ENCODE measurements at regions of chr10 and their contacts with region 1.

Region 1: DNA sequence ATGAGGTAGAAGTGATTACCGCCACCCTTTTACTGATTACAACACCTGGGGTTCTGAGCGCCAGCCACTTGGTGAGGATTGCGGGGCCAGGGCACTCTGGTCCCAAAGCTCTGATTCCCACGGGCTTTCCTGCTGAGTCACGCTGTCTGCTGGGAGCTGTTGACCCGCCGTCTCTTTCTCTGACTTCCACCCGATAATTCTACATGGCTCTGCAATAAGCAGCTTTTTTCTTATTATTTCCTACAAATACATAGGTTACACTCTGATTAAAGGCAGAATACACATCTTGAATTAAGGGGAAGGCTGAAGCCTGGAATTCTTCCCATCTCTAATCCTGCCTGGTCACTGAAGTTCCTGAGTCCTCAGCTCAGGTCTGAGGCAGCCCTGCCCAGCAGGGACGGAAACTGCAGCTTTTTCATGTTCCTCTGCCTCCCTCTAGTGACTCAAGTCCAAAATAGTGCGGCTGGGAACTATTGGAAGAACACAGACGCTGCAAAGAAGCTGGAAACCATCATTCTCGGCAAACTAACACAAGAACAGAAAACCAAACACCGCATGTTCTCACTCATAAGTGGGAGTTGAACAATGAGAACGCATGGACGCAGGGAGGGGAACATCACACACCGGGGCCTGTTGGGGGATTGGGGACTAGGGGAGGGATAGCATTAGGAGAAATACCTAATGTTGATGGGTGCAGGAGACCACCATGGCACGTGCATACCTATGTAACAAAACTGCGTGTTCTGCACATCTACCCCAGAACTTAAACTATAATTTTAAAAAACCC is 178.3 kb downstream of the PRKCQ start:
- DNase-seq: peak in 8 of 9 donors; percentile 49 to 74 (median 66)
- ATAC-seq: peak; percentile 87
- H3K4me3 ChIP-seq: no peak overlapping the region
- H3K4me3 Mint-ChIP-seq: peak overlapping the region in 9 of 10 donors; percentile 0 to 49 (median 38)
- H3K27ac ChIP-seq: no peak overlapping the region
- H3K27ac Mint-ChIP-seq: peak overlapping the region in 8 of 9 donors; percentile 4 to 82 (median 56)
- H3K4me1 ChIP-seq: peaks cover 0 to 11% of the 10 kb centered on the region in 2 donors
- H3K4me1 Mint-ChIP-seq: peaks cover 4 to 33% (median 18%) of the 10 kb centered on the region in 7 donors
- H3K27me3 ChIP-seq: no peaks in the 10 kb centered on the region
- H3K27me3 Mint-ChIP-seq: peaks cover 0 to 13% (median 0%) of the 10 kb centered on the region in 5 donors

Region 2: DNA sequence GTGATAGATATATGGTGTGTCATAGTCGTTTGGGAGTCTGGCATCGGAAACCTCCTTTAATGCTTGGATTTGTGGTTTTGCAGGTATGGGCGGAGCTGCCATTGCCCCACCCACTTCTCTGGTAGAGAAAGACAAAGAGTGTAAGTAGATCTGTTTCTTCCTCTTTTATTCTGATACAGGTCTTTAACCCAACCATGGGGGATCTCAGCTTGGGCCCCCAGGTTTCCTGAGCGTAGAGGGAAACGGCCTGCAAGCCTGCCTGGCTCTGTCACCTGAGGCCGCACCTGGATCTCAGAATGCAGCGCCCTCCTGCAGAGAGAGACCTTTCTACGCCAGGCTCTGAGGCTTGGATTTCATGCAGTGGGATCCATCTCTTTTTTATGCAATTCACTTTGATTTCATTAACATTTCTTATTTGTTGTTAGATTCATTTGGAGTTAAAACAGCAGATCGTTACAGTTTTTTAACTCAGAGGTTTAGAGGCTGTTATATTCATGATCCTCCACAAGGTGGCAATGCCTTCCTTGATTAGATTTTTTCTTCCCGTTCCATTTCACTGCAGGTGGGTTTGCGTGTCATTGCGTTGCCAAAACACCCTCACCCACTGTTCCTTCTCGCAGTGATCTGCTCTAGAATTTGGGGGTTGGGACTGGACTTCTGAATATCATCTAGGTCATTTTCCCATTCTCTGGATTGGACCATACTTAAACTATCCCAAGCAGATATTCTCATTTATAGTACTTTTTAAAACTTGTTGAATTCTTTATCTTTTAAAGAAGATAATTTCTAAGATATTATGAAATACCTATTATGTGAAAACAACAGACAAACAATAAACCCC is 292.9 kb before region 1 on chr10:
- CTCF ChIA-PET with region 1: interaction called, 82 read pairs
- POLR2A ChIA-PET with region 1: interaction called, 4 read pairs
- intact Hi-C with region 1: loop called (anchors 1 kb)
- DNase-seq: peak in 7 of 9 donors; percentile 38 to 66 (median 62)
- ATAC-seq: peak; percentile 85
- H3K4me3 ChIP-seq: no peak overlapping the region
- H3K4me3 Mint-ChIP-seq: peak overlapping the region in 3 of 10 donors; percentile 2 to 37 (median 29)
- H3K27ac ChIP-seq: no peak overlapping the region
- H3K27ac Mint-ChIP-seq: peak overlapping the region; percentile 37 to 91 (median 80)
- H3K4me1 ChIP-seq: peaks cover 10 to 11% of the 10 kb centered on the region in 2 donors
- H3K4me1 Mint-ChIP-seq: peaks cover 11 to 38% (median 23%) of the 10 kb centered on the region in 7 donors
- H3K27me3 ChIP-seq: no peaks in the 10 kb centered on the region
- H3K27me3 Mint-ChIP-seq: no peaks in the 10 kb centered on the region

Region 3: DNA sequence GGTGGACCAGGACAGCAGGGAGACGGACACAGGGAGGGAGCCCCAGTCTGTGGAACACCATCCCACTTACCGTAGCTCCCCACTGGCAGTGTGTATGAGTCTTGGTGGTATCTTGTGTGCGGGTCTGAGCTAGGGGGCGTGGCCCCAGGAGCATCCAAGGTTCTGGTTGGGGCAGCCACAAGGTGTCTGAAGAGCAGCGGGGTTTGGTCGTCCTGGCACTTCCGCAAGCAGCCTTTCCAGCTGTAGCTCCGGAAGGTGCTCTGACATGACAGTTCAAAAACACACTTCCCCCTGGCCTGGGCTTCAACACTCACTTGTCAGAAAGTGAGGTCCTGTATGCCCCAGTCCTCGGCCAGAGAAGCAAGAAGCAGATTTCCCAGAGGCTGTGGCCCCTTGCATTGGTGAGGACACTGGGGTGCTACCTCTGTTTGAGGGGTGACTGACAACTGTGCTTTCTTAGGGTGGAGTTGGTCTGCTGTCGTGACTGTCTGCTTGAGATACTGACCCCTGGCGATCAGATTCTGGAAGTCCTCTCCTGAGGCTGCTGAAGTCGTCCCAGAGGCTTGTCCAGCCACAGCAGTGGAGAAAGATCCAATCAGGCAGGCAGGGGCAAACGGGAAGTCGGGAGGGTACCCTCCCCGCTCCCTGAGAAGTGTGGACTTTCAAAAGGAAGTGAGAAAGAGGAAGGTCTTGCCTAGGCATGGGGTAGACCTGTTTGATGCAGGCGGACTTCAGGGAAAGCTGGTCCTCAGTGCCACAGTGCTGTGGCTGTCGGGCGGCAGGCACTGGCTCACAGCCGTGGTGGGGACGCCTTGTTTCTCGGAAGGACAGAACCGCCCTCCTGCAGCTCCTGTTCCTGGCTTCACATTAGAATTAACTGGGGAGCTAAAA is 250.4 kb before region 1 on chr10:
- CTCF ChIA-PET with region 1: interaction called, 12 read pairs
- POLR2A ChIA-PET with region 1: interaction called, 3 read pairs
- intact Hi-C with region 1: loop called in 1 of 2 experiments (anchors 1 kb)
- DNase-seq: peak; percentile 26 to 58 (median 53)
- ATAC-seq: peak; percentile 79
- H3K4me3 ChIP-seq: peak overlapping the region; percentile 28
- H3K4me3 Mint-ChIP-seq: peak overlapping the region; percentile 70 to 85 (median 80)
- H3K27ac ChIP-seq: peak overlapping the region; percentile 25
- H3K27ac Mint-ChIP-seq: peak overlapping the region; percentile 68 to 92 (median 85)
- H3K4me1 ChIP-seq: peaks cover 1 to 32% of the 10 kb centered on the region in 2 donors
- H3K4me1 Mint-ChIP-seq: peaks cover 49 to 68% (median 59%) of the 10 kb centered on the region in 7 donors
- H3K27me3 ChIP-seq: no peaks in the 10 kb centered on the region
- H3K27me3 Mint-ChIP-seq: no peaks in the 10 kb centered on the region

Region 4: GRCh38 chr10:6218692-6219493 is 182.9 kb before region 1 on chr10:
- CTCF ChIA-PET with region 1: interaction called, 6 read pairs
- POLR2A ChIA-PET with region 1: no interaction called
- intact Hi-C with region 1: loop called in 1 of 2 experiments (anchors 5 kb)
- DNase-seq: no peak
- ATAC-seq: no peak
- H3K4me3 ChIP-seq: no peak overlapping the region
- H3K4me3 Mint-ChIP-seq: no peak overlapping the region
- H3K27ac ChIP-seq: no peak overlapping the region
- H3K27ac Mint-ChIP-seq: peak overlapping the region in 4 of 9 donors; percentile 16 to 59 (median 25)
- H3K4me1 ChIP-seq: no peaks in the 10 kb centered on the region
- H3K4me1 Mint-ChIP-seq: peaks cover 0 to 10% (median 0%) of the 10 kb centered on the region in 7 donors
- H3K27me3 ChIP-seq: no peaks in the 10 kb centered on the region
- H3K27me3 Mint-ChIP-seq: no peaks in the 10 kb centered on the region

Region 5: DNA sequence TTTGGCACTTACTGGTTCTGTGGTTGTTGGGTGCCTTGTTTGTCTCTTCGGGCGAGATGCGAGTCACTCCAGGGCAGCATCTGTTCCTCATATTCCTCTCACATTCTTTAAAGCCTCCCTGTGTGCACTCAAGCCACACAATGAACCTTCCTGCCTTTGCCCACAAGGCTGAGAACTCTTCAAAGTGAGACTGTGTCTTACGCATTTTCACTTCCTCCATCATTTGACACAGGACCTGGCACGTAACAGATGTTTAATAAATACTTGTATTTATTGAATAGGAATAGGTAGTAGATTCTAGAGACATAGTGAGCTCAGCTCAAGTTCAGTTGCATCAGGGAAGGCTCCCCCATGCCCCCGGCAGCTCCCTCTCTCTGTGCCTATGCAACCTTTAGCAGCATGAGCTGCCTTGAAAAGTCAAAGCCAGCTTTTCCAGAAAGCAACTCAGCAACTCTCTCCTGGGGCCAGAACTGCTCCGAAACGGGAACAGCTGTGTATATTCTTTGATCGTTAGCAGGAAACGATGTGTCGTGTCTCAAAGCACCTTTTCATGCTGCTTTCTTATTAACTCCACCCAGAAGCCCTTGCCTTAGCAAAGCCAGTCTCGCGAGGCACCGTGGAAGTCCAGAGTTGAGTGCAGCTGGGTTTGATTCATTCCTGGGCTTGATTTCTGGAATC is 101.5 kb before region 1 on chr10:
- CTCF ChIA-PET with region 1: interaction called, 4 read pairs
- POLR2A ChIA-PET with region 1: no interaction called
- intact Hi-C with region 1: loop called in 1 of 2 experiments (anchors 5 kb)
- DNase-seq: peak in 7 of 9 donors; percentile 35 to 63 (median 51)
- ATAC-seq: peak; percentile 87
- H3K4me3 ChIP-seq: peak overlapping the region; percentile 15
- H3K4me3 Mint-ChIP-seq: peak overlapping the region; percentile 30 to 78 (median 60)
- H3K27ac ChIP-seq: no peak overlapping the region
- H3K27ac Mint-ChIP-seq: peak overlapping the region; percentile 58 to 95 (median 82)
- H3K4me1 ChIP-seq: peaks cover 7 to 12% of the 10 kb centered on the region in 2 donors
- H3K4me1 Mint-ChIP-seq: peaks cover 7 to 54% (median 27%) of the 10 kb centered on the region in 7 donors
- H3K27me3 ChIP-seq: no peaks in the 10 kb centered on the region
- H3K27me3 Mint-ChIP-seq: no peaks in the 10 kb centered on the region

Region 6: GRCh38 chr10:6530211-6530840 is 128.6 kb after region 1 on chr10:
- CTCF ChIA-PET with region 1: no interaction called
- POLR2A ChIA-PET with region 1: no interaction called
- intact Hi-C with region 1: no loop called
- DNase-seq: peak; percentile 37 to 89 (median 85)
- ATAC-seq: peak; percentile 96
- H3K4me3 ChIP-seq: peak overlapping the region; percentile 34
- H3K4me3 Mint-ChIP-seq: peak overlapping the region; percentile 84 to 95 (median 88)
- H3K27ac ChIP-seq: peak overlapping the region; percentile 74
- H3K27ac Mint-ChIP-seq: peak overlapping the region; percentile 97 to 100 (median 99)
- H3K4me1 ChIP-seq: peaks cover 46 to 58% of the 10 kb centered on the region in 2 donors
- H3K4me1 Mint-ChIP-seq: peaks cover 67 to 99% (median 91%) of the 10 kb centered on the region in 7 donors
- H3K27me3 ChIP-seq: no peaks in the 10 kb centered on the region
- H3K27me3 Mint-ChIP-seq: no peaks in the 10 kb centered on the region

Measured in naive thymus-derived CD4-positive, alpha-beta T cell (primary cell).